ENCODE measurements at regions of chr3 and their contacts with region 1.

Region 1: GRCh38 chr3:102180291-102181039 is 254.3 kb upstream of the ZPLD1 start:
- DNase-seq: peak; percentile 93
- H3K4me3 ChIP-seq: no peak overlapping the region
- H3K27ac ChIP-seq: peak overlapping the region; percentile 94
- H3K4me1 ChIP-seq: peaks cover 60% of the 10 kb centered on the region
- H3K27me3 ChIP-seq: no peaks in the 10 kb centered on the region
- CTCF ChIP-seq: no peak

Region 2: DNA sequence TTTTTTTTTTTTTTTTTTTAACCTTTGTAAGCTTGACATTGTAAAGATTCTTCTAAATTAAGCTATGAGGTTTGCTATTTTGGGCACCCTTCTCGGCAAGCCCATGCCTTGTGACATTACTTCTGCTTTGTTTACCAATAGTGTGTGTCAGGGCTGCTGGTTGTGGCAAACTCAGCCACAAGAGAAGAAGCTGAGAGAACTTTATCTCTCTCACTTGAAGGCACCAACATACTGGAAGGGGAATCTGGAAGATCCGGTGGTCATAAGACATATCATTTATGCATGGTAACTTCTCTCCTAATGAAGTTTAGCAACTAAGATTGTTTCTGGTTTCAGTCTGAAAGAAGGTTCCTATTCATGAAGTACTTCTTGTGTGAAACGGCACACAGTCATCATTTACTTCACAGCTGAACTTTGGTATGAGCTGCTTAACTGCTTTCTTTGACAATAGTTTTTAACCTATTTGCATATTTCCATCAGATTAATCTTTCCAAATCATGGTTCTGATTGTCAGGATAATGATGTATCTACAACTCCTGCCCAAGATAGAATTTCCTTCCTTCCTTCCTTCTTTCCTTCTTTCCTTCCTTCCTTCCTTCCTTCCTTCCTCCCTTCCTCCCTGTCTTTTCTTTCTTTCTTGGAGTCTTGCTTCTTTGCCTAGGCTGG is 141.9 kb before region 1 on chr3:
- CTCF ChIA-PET with region 1: interaction called, 3 read pairs
- POLR2A ChIA-PET with region 1: interaction called, 4 read pairs
- intact Hi-C with region 1: loop called (anchors 10 kb)
- DNase-seq: peak; percentile 82
- H3K4me3 ChIP-seq: no peak overlapping the region
- H3K27ac ChIP-seq: peak overlapping the region; percentile 76
- H3K4me1 ChIP-seq: peaks cover 17% of the 10 kb centered on the region
- H3K27me3 ChIP-seq: no peaks in the 10 kb centered on the region
- CTCF ChIP-seq: no peak

Region 3: GRCh38 chr3:102069211-102069662 is 111.2 kb before region 1 on chr3:
- CTCF ChIA-PET with region 1: no interaction called
- POLR2A ChIA-PET with region 1: no interaction called
- intact Hi-C with region 1: no loop called
- DNase-seq: peak; percentile 31
- H3K4me3 ChIP-seq: no peak overlapping the region
- H3K27ac ChIP-seq: no peak overlapping the region
- H3K4me1 ChIP-seq: no peaks in the 10 kb centered on the region
- H3K27me3 ChIP-seq: no peaks in the 10 kb centered on the region
- CTCF ChIP-seq: no peak

Region 4: DNA sequence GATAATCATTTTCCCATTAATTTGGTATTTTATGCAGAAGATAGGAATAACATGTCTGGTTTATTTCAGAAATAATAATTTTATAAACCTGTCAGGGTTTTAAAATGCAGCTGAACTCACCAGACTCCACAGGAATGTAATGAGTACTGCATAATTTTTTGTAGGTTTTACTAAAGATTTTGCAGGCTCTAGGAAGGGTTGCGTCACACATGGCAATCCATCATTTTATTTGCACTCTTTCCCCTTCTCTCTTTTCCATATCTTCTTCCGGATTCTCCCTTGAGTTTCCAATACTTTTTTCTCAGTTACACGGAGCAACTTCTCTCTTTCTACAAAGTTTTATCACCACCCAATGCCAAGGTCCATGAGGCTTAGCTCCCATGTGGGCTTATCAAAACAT is 96.5 kb before region 1 on chr3:
- CTCF ChIA-PET with region 1: no interaction called
- POLR2A ChIA-PET with region 1: no interaction called
- intact Hi-C with region 1: loop called (anchors 5 kb)
- DNase-seq: no peak
- H3K4me3 ChIP-seq: no peak overlapping the region
- H3K27ac ChIP-seq: no peak overlapping the region
- H3K4me1 ChIP-seq: peaks cover 56% of the 10 kb centered on the region
- H3K27me3 ChIP-seq: no peaks in the 10 kb centered on the region
- CTCF ChIP-seq: no peak

Region 5: DNA sequence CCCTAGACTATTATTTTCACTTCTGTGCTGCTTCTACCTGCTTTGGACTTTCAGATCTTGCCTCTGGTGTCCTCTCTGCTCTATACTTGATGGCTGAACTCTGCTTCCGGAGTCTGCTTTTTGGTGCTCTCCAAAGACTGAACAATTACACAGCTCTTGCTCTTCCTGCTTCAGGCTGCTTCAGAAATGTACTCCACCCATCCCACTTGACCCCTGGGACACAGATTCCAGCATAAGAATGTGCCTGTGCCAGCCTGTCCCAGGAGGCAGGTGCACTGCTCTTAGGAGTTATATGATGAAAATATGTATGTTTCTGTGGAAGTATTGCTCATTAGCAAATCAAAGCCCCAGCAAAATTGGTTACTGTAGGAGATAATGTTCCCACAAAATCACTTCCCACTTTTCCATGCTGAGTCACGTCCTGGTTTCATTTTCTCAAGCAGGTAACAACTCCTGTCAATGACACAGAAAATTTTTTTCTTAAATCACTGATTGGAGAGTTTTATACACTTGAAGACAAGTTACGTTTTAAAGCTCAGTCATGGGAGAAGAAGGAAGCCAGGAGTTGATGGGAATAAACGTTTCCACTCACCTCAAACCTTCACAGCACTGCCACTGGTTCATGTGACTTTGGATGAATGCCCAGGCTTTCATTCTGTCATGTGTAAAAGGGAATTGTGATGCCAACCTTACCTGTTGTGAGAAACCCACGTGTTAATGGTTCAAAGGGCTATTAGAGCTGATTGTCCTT is 14.9 kb after region 1 on chr3:
- CTCF ChIA-PET with region 1: no interaction called
- POLR2A ChIA-PET with region 1: no interaction called
- intact Hi-C with region 1: no loop called
- DNase-seq: no peak
- H3K4me3 ChIP-seq: no peak overlapping the region
- H3K27ac ChIP-seq: no peak overlapping the region
- H3K4me1 ChIP-seq: no peaks in the 10 kb centered on the region
- H3K27me3 ChIP-seq: no peaks in the 10 kb centered on the region
- CTCF ChIP-seq: no peak

Region 6: DNA sequence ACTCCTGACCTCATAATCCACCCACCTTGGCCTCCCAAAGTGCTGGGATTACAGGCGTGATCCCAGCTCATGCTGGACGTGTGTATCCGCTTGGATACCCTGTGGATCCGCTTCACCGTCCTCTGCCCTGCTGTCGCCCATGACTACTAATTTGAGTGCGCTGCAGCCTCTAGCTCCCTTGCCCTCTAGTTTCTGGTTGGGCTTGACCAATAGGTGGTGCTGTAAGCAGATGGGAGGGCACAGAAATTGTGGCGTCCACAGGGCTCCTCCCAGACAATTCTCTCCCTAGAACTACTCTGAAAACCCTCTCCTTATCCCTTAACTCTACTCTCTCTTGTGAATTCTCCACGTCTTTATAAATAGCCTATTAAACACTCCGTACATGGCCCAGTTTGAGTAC is 290.5 kb after region 1 on chr3:
- CTCF ChIA-PET with region 1: no interaction called
- POLR2A ChIA-PET with region 1: no interaction called
- intact Hi-C with region 1: no loop called
- DNase-seq: peak; percentile 60
- H3K4me3 ChIP-seq: no peak overlapping the region
- H3K27ac ChIP-seq: no peak overlapping the region
- H3K4me1 ChIP-seq: no peaks in the 10 kb centered on the region
- H3K27me3 ChIP-seq: no peaks in the 10 kb centered on the region
- CTCF ChIP-seq: peak; percentile 55